Endothelial cell of umbilical vein (primary cell): ENCODE measurements at regions of chr3 and their contacts with region 1.

Region 1: GRCh38 chr3:122514123-122515019 is at the start of gene KPNA1:
- DNase-seq: peak; percentile 92
- H3K4me3 ChIP-seq: peak within 1 kb of the TSS; percentile 55 to 96 (median 91)
- H3K27ac ChIP-seq: peak within 1 kb of the TSS; percentile 72
- H3K4me1 ChIP-seq: peaks cover 14% of the 10 kb centered on the region
- H3K27me3 ChIP-seq: peaks cover 1 to 8% of the 10 kb centered on the region in 2 experiments
- CTCF ChIP-seq: no peak
- POLR2A ChIP-seq: peak; percentile 94
- total RNA-seq, gene KPNA1: 110 and 113 TPM in 2 replicates

Region 2: GRCh38 chr3:122458992-122459391 is 55.4 kb before region 1 on chr3:
- CTCF ChIA-PET with region 1: interaction called, 7 read pairs
- POLR2A ChIA-PET with region 1: no interaction called
- dilution Hi-C with region 1: no loop called
- intact Hi-C with region 1: loop called (anchors 2 kb)
- DNase-seq: peak; percentile 51
- H3K4me3 ChIP-seq: no peak overlapping the region
- H3K27ac ChIP-seq: no peak overlapping the region
- H3K4me1 ChIP-seq: no peaks in the 10 kb centered on the region
- H3K27me3 ChIP-seq: no peaks in the 10 kb centered on the region
- CTCF ChIP-seq: peak in 1 of 2 donors; percentile 3
- POLR2A ChIP-seq: no peak

Region 3: GRCh38 chr3:122484985-122485384 is 29.4 kb before region 1 on chr3:
- CTCF ChIA-PET with region 1: interaction called, 3 read pairs
- POLR2A ChIA-PET with region 1: no interaction called
- dilution Hi-C with region 1: no loop called
- intact Hi-C with region 1: loop called (anchors 1 kb)
- DNase-seq: no peak
- H3K4me3 ChIP-seq: no peak overlapping the region
- H3K27ac ChIP-seq: no peak overlapping the region
- H3K4me1 ChIP-seq: peaks cover 16% of the 10 kb centered on the region
- H3K27me3 ChIP-seq: no peaks in the 10 kb centered on the region
- CTCF ChIP-seq: no peak
- POLR2A ChIP-seq: no peak